Activated naive CD4-positive, alpha-beta T cell treated with anti-CD3 and anti-CD28 coated beads for 36 hours (primary cell): ENCODE measurements at regions of chr9 and their contacts with region 1.

Region 1: GRCh38 chr9:36102742-36103495 is 33.6 kb upstream of the GLIPR2 start:
- DNase-seq: peak; percentile 95
- H3K4me3 Mint-ChIP-seq: no peak overlapping the region
- H3K27ac Mint-ChIP-seq: peak overlapping the region; percentile 34
- H3K4me1 Mint-ChIP-seq: peaks cover 6% of the 10 kb centered on the region
- H3K27me3 Mint-ChIP-seq: no peaks in the 10 kb centered on the region

Region 2: DNA sequence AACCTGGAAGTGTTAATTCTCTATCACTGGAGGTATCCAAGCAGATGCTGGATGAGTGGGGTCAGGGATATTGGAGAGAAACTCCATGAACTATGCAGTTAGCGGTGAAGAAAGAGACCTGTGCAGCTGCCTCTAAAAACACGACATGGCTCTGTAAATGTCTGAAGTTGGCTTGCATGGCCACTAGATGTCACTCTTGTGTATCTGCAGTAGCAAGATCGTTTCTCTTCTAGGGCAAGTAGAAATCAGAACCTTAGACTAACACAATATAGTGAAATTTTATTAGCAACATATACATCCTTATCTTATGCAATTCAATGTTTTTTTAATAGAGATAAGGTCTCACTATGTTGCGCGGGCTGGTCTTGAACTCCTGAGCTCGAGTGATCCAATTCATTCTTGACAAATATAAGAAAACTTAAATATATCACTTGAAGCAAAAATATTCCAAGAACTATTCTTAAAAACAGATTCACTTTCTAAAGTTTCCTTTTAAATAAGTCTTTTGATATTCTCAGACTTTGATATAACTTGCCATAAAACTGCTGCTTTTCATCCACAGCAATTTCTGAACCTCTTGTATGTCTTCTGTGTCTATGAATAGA is 147.9 kb before region 1 on chr9:
- CTCF ChIA-PET with region 1: interaction called, 4 read pairs
- intact Hi-C with region 1: loop called (anchors 2 kb)
- DNase-seq: peak; percentile 73
- H3K4me3 Mint-ChIP-seq: no peak overlapping the region
- H3K27ac Mint-ChIP-seq: no peak overlapping the region
- H3K4me1 Mint-ChIP-seq: no peaks in the 10 kb centered on the region
- H3K27me3 Mint-ChIP-seq: no peaks in the 10 kb centered on the region

Region 3: DNA sequence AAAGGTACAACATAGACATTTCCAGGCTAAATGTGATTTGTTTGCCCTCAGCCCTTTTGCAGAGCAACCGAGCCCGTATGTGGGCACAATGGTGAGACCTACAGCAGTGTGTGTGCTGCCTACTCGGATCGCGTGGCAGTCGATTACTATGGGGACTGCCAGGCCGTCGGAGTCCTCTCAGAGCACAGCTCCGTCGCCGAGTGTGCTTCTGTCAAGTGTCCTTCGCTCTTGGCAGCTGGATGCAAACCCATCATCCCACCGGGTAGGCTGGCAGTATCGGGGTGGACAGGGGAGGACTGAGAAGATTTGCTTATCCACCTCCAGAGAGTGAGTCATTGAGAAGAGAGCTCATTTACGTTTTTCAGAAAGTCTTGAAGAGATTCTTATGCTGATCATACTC is 15.8 kb after region 1 on chr9:
- CTCF ChIA-PET with region 1: interaction called, 42 read pairs
- intact Hi-C with region 1: no loop called
- DNase-seq: no peak
- H3K4me3 Mint-ChIP-seq: no peak overlapping the region
- H3K27ac Mint-ChIP-seq: no peak overlapping the region
- H3K4me1 Mint-ChIP-seq: no peaks in the 10 kb centered on the region
- H3K27me3 Mint-ChIP-seq: no peaks in the 10 kb centered on the region

Region 4: DNA sequence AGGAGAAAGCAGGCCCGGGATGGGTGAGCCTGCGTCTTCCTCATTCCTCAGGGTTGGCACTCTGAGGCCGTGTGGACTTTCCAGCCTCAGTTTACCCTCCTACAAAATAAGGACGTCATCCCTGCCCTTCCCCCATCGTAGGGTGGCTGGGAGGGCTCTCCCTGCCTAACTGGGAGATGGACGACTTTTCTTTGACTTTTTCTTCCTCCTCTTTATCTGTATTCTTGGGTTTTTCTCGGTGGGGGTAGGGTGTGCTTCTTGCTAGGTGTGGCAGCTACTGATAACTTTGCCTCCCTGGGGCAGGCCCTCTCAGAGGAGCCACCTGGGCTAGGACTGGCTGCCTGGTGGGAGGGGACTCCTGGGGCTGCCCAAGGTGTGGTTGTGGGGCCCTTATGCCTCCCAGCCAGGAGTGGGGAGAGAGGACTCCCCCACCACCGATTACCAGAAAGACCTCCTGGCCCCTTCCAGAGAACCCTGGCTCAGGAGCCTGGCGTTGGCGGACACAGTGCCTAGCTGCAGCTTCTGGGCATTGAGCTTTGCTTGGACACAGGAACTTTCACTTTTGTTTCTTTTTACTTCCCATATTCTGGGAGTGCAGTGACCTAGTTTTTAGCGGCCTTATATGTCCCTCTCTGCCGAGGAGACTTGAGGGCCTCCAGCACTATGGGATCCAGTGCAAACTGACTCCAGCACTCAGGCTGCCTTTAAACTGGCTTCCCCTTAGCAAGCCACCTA is 39.8 kb after region 1 on chr9:
- CTCF ChIA-PET with region 1: interaction called, 10 read pairs
- intact Hi-C with region 1: loop called (anchors 2 kb)
- DNase-seq: peak; percentile 36
- H3K4me3 Mint-ChIP-seq: peak overlapping the region; percentile 79
- H3K27ac Mint-ChIP-seq: peak overlapping the region; percentile 93
- H3K4me1 Mint-ChIP-seq: peaks cover 86% of the 10 kb centered on the region
- H3K27me3 Mint-ChIP-seq: no peaks in the 10 kb centered on the region

Region 5: DNA sequence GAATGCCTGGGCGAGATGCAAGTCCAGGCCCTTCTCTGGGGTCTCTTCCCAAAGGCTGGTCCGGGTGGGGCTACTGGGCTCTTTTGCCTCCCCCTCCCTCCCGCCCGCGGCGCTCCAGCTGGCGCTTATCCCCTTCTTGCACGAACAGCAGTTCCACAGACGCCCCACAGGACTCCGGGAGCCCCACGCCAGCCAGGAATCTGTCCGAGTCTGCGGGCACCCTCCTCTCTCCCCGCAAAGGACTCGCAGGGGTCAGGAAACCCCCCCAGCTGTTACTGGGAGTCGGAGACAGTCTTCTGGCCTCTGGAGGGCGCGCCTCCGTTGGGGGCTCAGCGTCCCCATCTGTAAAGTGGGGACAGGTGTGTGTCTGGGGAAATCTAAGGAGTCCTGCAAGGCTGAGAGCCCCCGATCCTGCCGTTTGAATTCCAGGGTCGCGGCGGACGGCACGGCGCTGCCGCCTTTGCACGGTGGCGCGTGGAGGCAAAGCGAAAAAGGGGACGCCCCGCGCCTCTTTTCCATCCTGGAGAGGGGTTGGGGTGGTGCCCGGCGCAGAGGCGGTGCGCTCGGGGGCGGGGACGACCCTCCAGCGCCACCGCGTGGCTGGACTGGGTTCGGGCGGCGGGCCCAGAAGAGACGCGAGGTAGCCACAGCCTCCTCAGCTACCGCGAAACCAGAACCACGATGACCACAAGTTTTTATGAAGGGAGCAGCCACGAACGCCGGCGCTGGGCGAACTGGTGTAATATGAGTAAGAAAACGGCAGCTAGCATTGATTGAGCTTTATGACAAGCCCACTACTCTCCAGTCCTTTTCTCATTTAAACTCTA is 63.4 kb after region 1 on chr9:
- CTCF ChIA-PET with region 1: interaction called, 283 read pairs
- intact Hi-C with region 1: loop called (anchors 1 kb)
- DNase-seq: peak; percentile 81
- H3K4me3 Mint-ChIP-seq: peak overlapping the region; percentile 70
- H3K27ac Mint-ChIP-seq: no peak overlapping the region
- H3K4me1 Mint-ChIP-seq: peaks cover 3% of the 10 kb centered on the region
- H3K27me3 Mint-ChIP-seq: no peaks in the 10 kb centered on the region

Region 6: DNA sequence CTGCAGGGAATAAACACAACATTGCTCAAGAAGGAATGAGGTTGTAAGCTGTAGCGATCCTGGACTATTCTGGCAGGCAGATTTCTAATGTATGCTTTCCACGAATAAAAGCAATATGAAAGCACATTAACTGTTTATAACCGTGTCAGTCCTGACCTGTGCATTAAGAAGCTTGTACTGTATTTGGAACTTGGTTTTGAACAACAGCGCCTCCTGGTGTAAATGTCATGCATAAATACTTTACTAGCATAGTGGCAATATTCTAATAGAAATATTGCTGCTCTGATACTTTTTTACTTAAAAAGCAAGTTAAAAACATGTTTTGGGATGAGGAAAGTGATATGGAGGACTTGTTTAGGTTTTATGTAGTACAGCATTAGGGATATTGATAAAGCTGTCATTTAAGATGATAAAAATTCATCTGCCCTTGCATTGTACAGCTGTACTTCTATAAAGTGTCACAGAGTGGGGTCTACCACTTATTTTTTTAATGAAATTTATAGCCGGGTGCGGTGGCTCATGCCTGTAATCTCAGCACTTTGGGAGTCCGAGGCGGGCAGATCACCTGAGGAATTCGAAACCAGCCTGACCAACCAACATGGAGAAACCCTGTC is 226.0 kb after region 1 on chr9:
- CTCF ChIA-PET with region 1: interaction called, 6 read pairs
- intact Hi-C with region 1: loop called (anchors 1 kb)
- DNase-seq: peak; percentile 70
- H3K4me3 Mint-ChIP-seq: no peak overlapping the region
- H3K27ac Mint-ChIP-seq: no peak overlapping the region
- H3K4me1 Mint-ChIP-seq: peaks cover 2% of the 10 kb centered on the region
- H3K27me3 Mint-ChIP-seq: no peaks in the 10 kb centered on the region

Region 7: DNA sequence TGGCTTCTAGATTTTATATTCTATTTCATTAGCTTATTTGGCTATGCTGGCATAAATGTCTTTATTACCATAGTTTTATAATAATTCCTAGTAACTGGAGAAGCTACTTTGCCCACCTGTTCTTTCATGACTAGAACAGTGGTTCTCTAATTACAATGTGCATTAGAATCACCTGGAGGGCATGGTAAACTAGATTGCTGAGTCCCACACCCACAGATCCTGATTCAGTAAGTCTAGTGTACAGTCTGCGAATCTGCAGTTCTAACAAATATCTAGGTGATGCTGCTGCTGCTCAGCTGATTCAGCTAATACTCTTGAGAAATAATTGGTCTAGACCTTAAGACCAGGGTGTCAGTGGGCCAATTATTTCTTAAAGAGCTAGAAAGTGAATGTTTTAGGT is 261.7 kb after region 1 on chr9:
- CTCF ChIA-PET with region 1: no interaction called
- intact Hi-C with region 1: no loop called
- DNase-seq: no peak
- H3K4me3 Mint-ChIP-seq: no peak overlapping the region
- H3K27ac Mint-ChIP-seq: no peak overlapping the region
- H3K4me1 Mint-ChIP-seq: peaks cover 6% of the 10 kb centered on the region
- H3K27me3 Mint-ChIP-seq: no peaks in the 10 kb centered on the region

Region 8: DNA sequence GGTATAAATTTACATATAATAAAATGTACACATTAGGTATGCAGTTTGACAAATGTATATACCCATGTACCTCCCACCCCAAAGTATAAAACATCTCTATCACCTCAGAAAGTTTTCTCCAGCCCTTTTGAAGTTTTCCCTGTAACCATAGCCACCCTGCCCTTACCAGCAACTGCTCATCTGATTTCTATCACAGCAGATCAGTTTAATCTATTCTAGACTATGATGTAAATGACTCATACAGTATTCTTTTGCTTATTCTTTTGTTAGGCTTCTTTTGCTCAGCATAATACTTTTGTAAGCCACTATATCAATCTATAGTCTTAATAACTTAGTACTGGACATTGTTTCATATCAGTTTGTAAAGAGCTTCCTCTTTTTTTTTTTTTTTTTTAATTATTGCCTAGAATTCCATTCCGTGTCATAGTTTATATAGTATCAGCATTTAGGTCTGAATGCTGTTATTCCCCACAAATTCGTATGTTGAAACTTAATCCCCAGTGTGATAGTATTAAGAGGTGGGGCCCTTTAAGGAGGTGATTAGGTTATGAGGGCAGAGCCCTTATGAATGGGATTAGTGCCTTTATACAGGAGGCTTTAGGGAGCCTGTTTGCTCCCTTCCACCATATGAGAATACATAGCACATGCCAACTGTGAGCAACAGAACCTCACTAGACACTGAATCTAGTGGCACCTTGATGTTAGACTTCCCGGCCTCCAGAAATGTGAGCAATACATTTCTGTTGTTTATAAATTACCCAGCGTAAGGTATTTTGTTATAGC is 490.1 kb after region 1 on chr9:
- CTCF ChIA-PET with region 1: no interaction called
- intact Hi-C with region 1: no loop called
- DNase-seq: no peak
- H3K4me3 Mint-ChIP-seq: no peak overlapping the region
- H3K27ac Mint-ChIP-seq: no peak overlapping the region
- H3K4me1 Mint-ChIP-seq: no peaks in the 10 kb centered on the region
- H3K27me3 Mint-ChIP-seq: no peaks in the 10 kb centered on the region